Adrenal gland (tissue), 19 donors: ENCODE measurements at regions of chr4 and their contacts with region 1.

Region 1: DNA sequence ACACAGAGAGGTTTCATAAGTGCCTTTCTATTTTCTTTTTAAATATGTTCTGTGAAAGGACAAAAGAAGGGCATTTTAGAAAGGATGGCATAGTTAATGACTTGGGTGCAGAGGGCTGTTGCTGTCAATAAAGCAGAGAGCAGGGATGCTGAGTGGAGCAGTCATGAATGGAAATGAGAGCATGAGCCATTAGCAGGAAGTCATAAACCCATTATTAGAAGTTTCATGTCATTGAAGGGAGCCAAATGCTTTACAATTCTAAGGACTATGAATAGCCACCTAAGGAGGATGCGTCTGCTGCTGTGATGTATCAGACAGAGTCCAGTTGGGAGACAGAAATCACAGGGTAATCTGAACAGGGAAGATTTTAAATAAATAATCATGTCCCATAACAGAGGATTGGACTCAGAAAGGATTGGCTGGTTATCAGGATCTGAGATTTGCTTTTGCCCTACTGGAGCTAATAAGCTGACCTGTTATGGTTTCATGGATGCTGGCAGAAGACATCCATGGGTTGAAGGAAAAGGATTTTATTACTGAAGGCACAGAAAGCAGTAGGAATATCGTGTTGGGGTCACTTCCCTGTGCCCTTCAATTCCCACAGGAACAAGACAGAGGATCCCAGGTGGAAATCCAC is 47.5 kb upstream of the WDR19 start:
- DNase-seq: no peak
- H3K4me3 ChIP-seq: no peak overlapping the region
- H3K27ac ChIP-seq: peak overlapping the region in 1 of 5 donors; percentile 44
- H3K4me1 ChIP-seq: peaks cover 0 to 9% of the 10 kb centered on the region in 2 donors
- H3K27me3 ChIP-seq: no peaks in the 10 kb centered on the region
- CTCF ChIP-seq: no peak
- POLR2A ChIP-seq: no peak

Region 2: GRCh38 chr4:38768968-38769394 is 365.8 kb before region 1 on chr4:
- intact Hi-C with region 1: loop called in 1 of 2 experiments (anchors 10 kb)
- DNase-seq: peak in 1 of 7 donors; percentile 23
- H3K4me3 ChIP-seq: no peak overlapping the region
- H3K27ac ChIP-seq: peak overlapping the region in 2 of 5 donors; percentile 5 to 60
- H3K4me1 ChIP-seq: peaks cover 0 to 11% of the 10 kb centered on the region in 2 donors
- H3K27me3 ChIP-seq: no peaks in the 10 kb centered on the region
- CTCF ChIP-seq: no peak
- POLR2A ChIP-seq: no peak

Region 3: DNA sequence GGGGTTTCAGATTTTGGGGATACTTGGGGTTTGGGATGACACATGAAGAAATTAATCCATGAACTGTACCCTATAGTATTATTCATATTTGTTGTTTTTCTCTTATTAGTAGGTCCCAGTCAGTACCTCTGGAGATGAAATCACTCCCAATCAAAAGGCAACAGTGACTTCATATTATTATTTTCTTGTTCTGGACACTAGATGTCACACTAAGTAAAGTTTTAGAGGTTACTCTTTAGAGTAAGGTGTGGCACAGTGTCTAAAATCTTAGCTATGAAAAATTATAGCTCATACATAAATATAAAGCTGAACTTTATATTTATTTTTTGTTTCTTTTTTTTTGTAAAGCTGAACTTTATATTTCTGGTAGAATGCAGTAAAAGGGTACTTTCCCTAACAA is 232.1 kb before region 1 on chr4:
- intact Hi-C with region 1: loop called in 1 of 2 experiments (anchors 5 kb)
- DNase-seq: no peak
- H3K4me3 ChIP-seq: no peak overlapping the region
- H3K27ac ChIP-seq: no peak overlapping the region
- H3K4me1 ChIP-seq: peaks cover 41 to 46% of the 10 kb centered on the region in 2 donors
- H3K27me3 ChIP-seq: no peaks in the 10 kb centered on the region
- CTCF ChIP-seq: peak in 5 of 6 experiments; percentile 35 to 55 (median 43)
- POLR2A ChIP-seq: no peak

Region 4: DNA sequence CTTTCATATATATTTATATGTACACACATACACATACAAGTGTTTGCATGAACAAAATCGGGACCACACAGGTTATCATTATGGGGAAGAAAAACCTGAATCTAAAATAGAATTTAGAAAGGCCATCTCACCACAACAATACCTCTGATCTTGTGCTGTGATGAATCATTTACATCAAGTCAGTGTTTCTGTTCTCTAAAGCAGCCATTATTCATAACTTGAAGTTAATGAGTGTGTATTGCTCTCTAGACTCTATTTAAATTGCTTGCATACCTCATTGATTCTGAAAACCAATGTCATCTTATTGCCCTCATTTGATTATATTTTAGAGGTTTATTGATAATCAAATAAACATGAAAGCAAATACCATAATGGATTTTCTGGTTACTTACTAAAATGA is 195.6 kb before region 1 on chr4:
- intact Hi-C with region 1: loop called in 1 of 2 experiments (anchors 10 kb)
- DNase-seq: no peak
- H3K4me3 ChIP-seq: no peak overlapping the region
- H3K27ac ChIP-seq: no peak overlapping the region
- H3K4me1 ChIP-seq: no peaks in the 10 kb centered on the region
- H3K27me3 ChIP-seq: no peaks in the 10 kb centered on the region
- CTCF ChIP-seq: no peak
- POLR2A ChIP-seq: no peak

Region 5: DNA sequence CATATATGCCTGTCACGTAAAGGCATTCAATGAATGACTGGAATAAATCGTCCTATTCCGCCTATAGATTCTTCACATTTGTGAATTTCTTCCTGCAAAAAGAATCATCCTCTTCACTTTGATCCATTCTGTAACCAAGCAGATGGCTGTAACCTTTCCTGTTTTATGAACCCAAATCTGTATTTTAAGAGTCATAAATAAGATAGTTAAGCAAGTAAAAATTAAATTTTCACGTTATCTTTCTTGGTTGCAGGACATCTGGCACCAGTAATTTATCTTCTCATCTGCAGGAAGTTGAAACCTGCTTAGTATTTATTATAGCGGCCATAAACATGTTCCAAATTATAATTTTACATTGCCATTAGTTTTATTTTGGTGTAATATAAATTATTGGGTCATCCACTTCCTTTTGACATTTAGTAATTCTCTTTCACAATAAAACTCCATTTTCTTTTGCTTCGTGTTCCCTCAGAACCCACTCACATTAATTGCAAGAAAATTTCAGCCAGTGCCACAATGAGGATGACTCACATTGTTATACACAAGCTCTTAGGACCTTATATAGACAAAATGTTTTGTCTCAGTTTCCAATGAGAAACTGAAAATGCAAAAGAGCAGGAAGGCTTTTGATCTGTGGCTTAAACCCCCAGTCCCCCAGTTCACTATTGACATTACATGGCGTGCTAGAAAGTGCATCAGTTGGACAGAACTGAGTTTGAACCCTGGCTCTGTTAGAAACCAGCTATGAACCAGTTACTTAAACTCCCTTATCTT is 153.7 kb before region 1 on chr4:
- intact Hi-C with region 1: no loop called
- DNase-seq: no peak
- H3K4me3 ChIP-seq: no peak overlapping the region
- H3K27ac ChIP-seq: no peak overlapping the region
- H3K4me1 ChIP-seq: peaks cover 0 to 2% of the 10 kb centered on the region in 2 donors
- H3K27me3 ChIP-seq: no peaks in the 10 kb centered on the region
- CTCF ChIP-seq: no peak
- POLR2A ChIP-seq: no peak

Region 6: DNA sequence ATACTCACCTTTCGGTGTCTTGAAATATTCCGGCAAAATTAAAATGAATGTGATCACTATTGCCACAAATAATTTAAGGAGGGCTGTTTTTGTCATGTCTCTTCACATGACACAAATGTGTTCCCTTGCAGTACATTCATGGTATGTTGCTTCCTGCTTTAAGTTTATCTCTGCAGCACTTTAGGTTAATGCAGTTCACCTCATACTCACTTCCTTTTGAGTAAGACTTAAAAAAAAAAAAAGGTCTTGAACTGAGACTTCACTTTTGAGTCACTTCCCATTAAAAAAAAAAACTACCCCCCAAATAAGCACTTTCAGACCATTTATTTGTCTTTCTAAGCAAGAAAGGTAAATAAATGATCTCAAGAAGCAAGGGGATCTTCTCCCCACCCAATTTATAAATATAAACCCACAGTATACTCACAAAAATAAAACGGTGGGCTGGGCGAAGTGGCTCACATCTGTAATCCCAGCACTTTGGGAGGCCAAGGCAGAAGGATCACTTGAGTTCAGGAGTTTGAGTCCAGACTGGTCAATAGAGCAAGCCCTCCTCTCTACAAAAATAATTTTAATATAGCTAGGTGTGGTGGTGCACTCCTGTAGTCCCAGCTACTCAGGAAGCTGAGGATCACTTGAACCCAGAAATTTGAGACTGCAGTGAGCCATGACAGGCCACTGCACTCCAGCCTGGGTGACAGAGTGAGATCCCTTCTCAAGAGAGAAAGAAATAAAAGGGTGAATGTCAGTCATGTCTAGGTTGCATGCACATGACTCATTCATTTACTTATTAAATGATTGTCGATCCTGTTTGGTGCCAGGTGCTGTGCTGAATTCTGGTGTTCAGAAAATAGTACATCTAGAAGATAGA is 102.3 kb before region 1 on chr4 and contains the start of gene TMEM156:
- intact Hi-C with region 1: no loop called
- DNase-seq: no peak
- H3K4me3 ChIP-seq: no peak within 1 kb of the TSS
- H3K27ac ChIP-seq: peak within 1 kb of the TSS in 1 of 5 donors; percentile 7
- H3K4me1 ChIP-seq: peaks cover 0 to 1% of the 10 kb centered on the region in 2 donors
- H3K27me3 ChIP-seq: no peaks in the 10 kb centered on the region
- CTCF ChIP-seq: no peak
- POLR2A ChIP-seq: no peak
- total RNA-seq, gene TMEM156: 0.29 to 2.2 (median 0.84) TPM in 7 of 9 donors, not detected in the others

Region 7: GRCh38 chr4:39062094-39062769 is 72.6 kb before region 1 on chr4 and contains the start of gene KLHL5:
- intact Hi-C with region 1: no loop called
- DNase-seq: no peak
- H3K4me3 ChIP-seq: no peak within 1 kb of the TSS
- H3K27ac ChIP-seq: no peak within 1 kb of the TSS
- H3K4me1 ChIP-seq: peaks cover 14 to 17% of the 10 kb centered on the region in 2 donors
- H3K27me3 ChIP-seq: no peaks in the 10 kb centered on the region
- CTCF ChIP-seq: no peak
- POLR2A ChIP-seq: no peak
- total RNA-seq, gene KLHL5: 21.1 to 63.8 (median 37.9) TPM